CD4-positive, alpha-beta T cell (primary cell): ENCODE measurements at regions of chr3 and their contacts with region 1.

Region 1: GRCh38 chr3:12810013-12810780 is 13.7 kb downstream of the CAND2 start:
- DNase-seq: peak; percentile 89 to 97 (median 93)
- ATAC-seq: peak; percentile 99
- H3K4me3 ChIP-seq: peak overlapping the region; percentile 42
- H3K4me3 Mint-ChIP-seq: peak overlapping the region; percentile 83
- H3K27ac ChIP-seq: no peak overlapping the region
- H3K27ac Mint-ChIP-seq: no peak overlapping the region
- H3K4me1 ChIP-seq: peaks cover 16% of the 10 kb centered on the region
- H3K4me1 Mint-ChIP-seq: peaks cover 19% of the 10 kb centered on the region
- H3K27me3 ChIP-seq: no peaks in the 10 kb centered on the region
- H3K27me3 Mint-ChIP-seq: no peaks in the 10 kb centered on the region
- CTCF ChIP-seq: peak; percentile 92

Region 2: GRCh38 chr3:12768579-12769527 is 41.3 kb before region 1 on chr3:
- CTCF ChIA-PET with region 1: no interaction called
- POLR2A ChIA-PET with region 1: no interaction called
- intact Hi-C with region 1: no loop called
- DNase-seq: no peak
- ATAC-seq: no peak
- H3K4me3 ChIP-seq: no peak overlapping the region
- H3K4me3 Mint-ChIP-seq: no peak overlapping the region
- H3K27ac ChIP-seq: no peak overlapping the region
- H3K27ac Mint-ChIP-seq: no peak overlapping the region
- H3K4me1 ChIP-seq: no peaks in the 10 kb centered on the region
- H3K4me1 Mint-ChIP-seq: peaks cover 7% of the 10 kb centered on the region
- H3K27me3 ChIP-seq: no peaks in the 10 kb centered on the region
- H3K27me3 Mint-ChIP-seq: no peaks in the 10 kb centered on the region
- CTCF ChIP-seq: no peak

Region 3: DNA sequence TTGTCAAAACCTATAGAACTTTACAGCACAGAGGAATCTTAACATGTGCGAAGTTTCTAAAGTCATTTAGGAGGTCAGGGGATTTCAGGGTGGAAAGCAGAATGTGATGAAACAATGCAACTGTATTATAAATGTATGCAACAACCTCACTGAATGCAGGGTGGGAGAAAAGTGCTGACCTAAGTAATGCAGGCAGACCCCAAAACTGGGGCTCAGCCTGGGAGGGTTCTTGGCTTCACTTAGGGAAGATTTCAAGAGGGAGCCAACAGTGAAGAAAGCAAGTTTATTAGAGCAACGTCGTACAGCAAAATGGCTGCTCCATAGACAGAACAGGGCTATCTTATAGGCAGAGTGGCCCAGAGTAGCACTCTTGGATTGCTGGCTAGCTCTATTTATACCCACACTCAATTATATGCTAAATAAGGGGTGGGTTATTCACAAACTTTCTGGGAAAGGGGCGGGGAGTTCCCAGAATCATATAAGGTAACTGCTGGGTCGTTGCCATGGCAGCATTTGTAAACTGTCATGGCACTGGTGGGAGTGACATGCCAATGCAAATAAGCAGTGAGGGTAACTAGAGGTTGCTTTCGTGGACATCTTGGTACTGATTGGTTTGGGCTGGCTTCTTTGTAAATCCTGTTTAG is 27.9 kb before region 1 on chr3:
- CTCF ChIA-PET with region 1: interaction called, 15 read pairs
- POLR2A ChIA-PET with region 1: interaction called, 3 read pairs
- intact Hi-C with region 1: no loop called
- DNase-seq: no peak
- ATAC-seq: no peak
- H3K4me3 ChIP-seq: no peak overlapping the region
- H3K4me3 Mint-ChIP-seq: no peak overlapping the region
- H3K27ac ChIP-seq: no peak overlapping the region
- H3K27ac Mint-ChIP-seq: no peak overlapping the region
- H3K4me1 ChIP-seq: no peaks in the 10 kb centered on the region
- H3K4me1 Mint-ChIP-seq: no peaks in the 10 kb centered on the region
- H3K27me3 ChIP-seq: no peaks in the 10 kb centered on the region
- H3K27me3 Mint-ChIP-seq: peaks cover 51% of the 10 kb centered on the region
- CTCF ChIP-seq: no peak

Region 4: GRCh38 chr3:12796171-12797123 is 13.8 kb before region 1 on chr3 and contains the start of gene CAND2:
- CTCF ChIA-PET with region 1: interaction called, 16 read pairs
- POLR2A ChIA-PET with region 1: interaction called, 26 read pairs
- intact Hi-C with region 1: loop called in 1 of 2 experiments (anchors 2 kb)
- DNase-seq: peak in 12 of 14 experiments; percentile 7 to 69 (median 32)
- ATAC-seq: peak; percentile 92
- H3K4me3 ChIP-seq: peak within 1 kb of the TSS; percentile 68
- H3K4me3 Mint-ChIP-seq: peak within 1 kb of the TSS; percentile 93
- H3K27ac ChIP-seq: no peak within 1 kb of the TSS
- H3K27ac Mint-ChIP-seq: peak within 1 kb of the TSS; percentile 23
- H3K4me1 ChIP-seq: peaks cover 13% of the 10 kb centered on the region
- H3K4me1 Mint-ChIP-seq: peaks cover 29% of the 10 kb centered on the region
- H3K27me3 ChIP-seq: no peaks in the 10 kb centered on the region
- H3K27me3 Mint-ChIP-seq: no peaks in the 10 kb centered on the region
- CTCF ChIP-seq: no peak
- total RNA-seq, gene CAND2: 3.5 to 6.0 TPM

Region 5: GRCh38 chr3:12967606-12968351 is 157.6 kb after region 1 on chr3:
- CTCF ChIA-PET with region 1: no interaction called
- POLR2A ChIA-PET with region 1: no interaction called
- intact Hi-C with region 1: loop called in 1 of 2 experiments (anchors 1 kb)
- DNase-seq: peak; percentile 82 to 97 (median 88)
- ATAC-seq: peak; percentile 95
- H3K4me3 ChIP-seq: peak overlapping the region; percentile 47
- H3K4me3 Mint-ChIP-seq: peak overlapping the region; percentile 80
- H3K27ac ChIP-seq: no peak overlapping the region
- H3K27ac Mint-ChIP-seq: peak overlapping the region; percentile 67
- H3K4me1 ChIP-seq: peaks cover 65% of the 10 kb centered on the region
- H3K4me1 Mint-ChIP-seq: peaks cover 78% of the 10 kb centered on the region
- H3K27me3 ChIP-seq: no peaks in the 10 kb centered on the region
- H3K27me3 Mint-ChIP-seq: no peaks in the 10 kb centered on the region
- CTCF ChIP-seq: no peak